ENCODE measurements at regions of chr9 and their contacts with region 1.

Region 1: DNA sequence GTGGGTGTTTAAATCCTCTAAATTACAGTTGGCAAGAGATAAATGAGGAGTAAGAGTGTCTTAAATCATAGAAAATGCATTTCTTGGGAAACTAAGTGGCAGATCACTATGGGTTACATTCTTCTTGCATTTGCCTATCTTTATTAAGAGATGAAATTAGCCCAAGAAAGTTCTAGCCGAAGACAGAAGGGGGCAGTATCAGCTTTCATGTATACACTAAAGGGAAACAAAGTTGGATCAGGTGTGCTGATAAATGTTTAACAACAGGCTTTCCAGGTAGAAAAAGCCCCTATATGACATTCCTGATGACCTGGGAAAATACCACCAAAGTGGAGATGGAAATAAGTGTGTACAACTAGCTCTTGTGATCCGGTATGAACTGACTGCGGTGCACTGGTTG is 81.9 kb upstream of the TLR4 start:
- DNase-seq: no peak
- H3K4me3 ChIP-seq: no peak overlapping the region
- H3K27ac ChIP-seq: no peak overlapping the region
- H3K4me1 ChIP-seq: no peaks in the 10 kb centered on the region
- H3K27me3 ChIP-seq: no peaks in the 10 kb centered on the region
- CTCF ChIP-seq: peak in 2 of 3 experiments; percentile 31 to 64; a peak in 2 of 4 replicates
- EP300 ChIP-seq: no peak
- POLR2A ChIP-seq: no peak
- RAD21 ChIP-seq: peak; percentile 51 to 64

Region 2: GRCh38 chr9:117325831-117326230 is 296.5 kb before region 1 on chr9:
- CTCF ChIA-PET with region 1: no interaction called
- POLR2A ChIA-PET with region 1: no interaction called
- DNase-seq: no peak
- H3K4me3 ChIP-seq: no peak overlapping the region
- H3K27ac ChIP-seq: no peak overlapping the region
- H3K4me1 ChIP-seq: no peaks in the 10 kb centered on the region
- H3K27me3 ChIP-seq: no peaks in the 10 kb centered on the region
- CTCF ChIP-seq: no peak
- EP300 ChIP-seq: no peak
- POLR2A ChIP-seq: no peak
- RAD21 ChIP-seq: no peak

Region 3: GRCh38 chr9:117612317-117612716 is 10.0 kb before region 1 on chr9:
- CTCF ChIA-PET with region 1: interaction called, 20 read pairs
- POLR2A ChIA-PET with region 1: no interaction called
- DNase-seq: no peak
- H3K4me3 ChIP-seq: no peak overlapping the region
- H3K27ac ChIP-seq: no peak overlapping the region
- H3K4me1 ChIP-seq: no peaks in the 10 kb centered on the region
- H3K27me3 ChIP-seq: no peaks in the 10 kb centered on the region
- CTCF ChIP-seq: no peak
- EP300 ChIP-seq: no peak
- POLR2A ChIP-seq: no peak
- RAD21 ChIP-seq: no peak

Region 4: DNA sequence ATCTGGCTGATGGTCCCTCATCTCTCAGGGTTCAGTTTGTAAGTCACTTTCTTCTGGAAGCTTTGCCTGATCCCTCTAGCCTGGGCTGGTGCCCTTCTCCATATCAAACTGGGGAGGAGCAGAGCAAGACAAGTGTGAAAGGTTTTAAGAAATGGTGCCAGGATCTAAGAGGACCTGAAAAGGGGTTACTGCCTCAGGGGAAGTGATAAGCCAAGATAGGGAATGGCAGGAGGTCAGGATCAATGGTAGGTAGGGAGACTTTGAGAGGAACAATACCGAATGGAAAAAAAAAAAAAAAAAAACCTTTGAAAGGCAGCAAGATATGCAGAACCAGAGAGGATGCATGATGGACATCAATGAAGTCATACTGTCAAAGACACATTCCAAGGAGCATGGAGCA is 14.3 kb after region 1 on chr9:
- CTCF ChIA-PET with region 1: interaction called, 19 read pairs
- POLR2A ChIA-PET with region 1: no interaction called
- DNase-seq: no peak
- H3K4me3 ChIP-seq: no peak overlapping the region
- H3K27ac ChIP-seq: no peak overlapping the region
- H3K4me1 ChIP-seq: no peaks in the 10 kb centered on the region
- H3K27me3 ChIP-seq: no peaks in the 10 kb centered on the region
- CTCF ChIP-seq: no peak
- EP300 ChIP-seq: no peak
- POLR2A ChIP-seq: no peak
- RAD21 ChIP-seq: no peak

Measured in H1 (cell line).